Testis (tissue), 5 donors: ENCODE measurements at regions of chr6 and their contacts with region 1.

Region 1: DNA sequence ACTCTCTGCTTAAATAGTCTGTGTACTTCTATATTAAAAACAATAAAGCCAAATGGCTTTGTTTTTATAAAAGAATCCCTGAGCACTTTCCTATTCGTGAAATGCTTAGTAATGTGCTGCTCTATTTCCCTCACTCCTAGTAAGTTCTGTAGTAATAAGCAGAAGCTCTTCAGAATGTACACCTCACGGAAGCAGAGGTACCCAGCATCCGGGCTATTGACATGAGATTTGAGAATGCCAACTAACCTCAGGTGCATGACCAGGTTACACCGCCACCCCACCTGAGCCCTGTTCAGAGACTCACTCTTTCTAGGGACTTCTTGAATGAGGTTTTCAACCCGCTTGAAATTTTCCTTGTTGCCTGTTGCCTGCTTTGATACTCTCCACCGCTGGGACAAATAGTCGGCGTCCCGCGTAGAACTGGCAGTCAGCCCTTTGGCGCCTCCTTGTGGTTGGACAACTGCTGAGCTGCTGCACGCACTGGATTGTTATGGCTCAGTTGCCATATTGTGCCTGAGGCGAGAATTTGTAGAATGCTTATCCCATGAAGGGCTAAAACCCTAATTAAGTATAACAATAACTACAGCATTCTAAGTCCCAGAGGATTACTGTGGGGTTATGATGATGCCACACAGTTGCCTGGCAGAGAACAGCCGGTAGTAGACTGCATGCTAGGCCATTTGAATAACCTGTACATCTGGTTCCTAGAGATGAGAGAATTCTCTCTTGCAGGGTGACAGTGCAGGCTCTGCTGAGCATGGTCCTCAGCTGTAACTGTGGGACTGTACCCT is 95.4 kb downstream of the KHDC1L start:
- DNase-seq: peak; percentile 94
- H3K4me3 ChIP-seq: peak overlapping the region in 1 of 2 donors; percentile 21
- H3K27ac ChIP-seq: no peak overlapping the region
- H3K4me1 ChIP-seq: no peaks in the 10 kb centered on the region
- H3K27me3 ChIP-seq: no peaks in the 10 kb centered on the region
- CTCF ChIP-seq: peak; percentile 86 to 90 (median 88)
- POLR2A ChIP-seq: no peak

Region 2: GRCh38 chr6:72619883-72620696 is 509.8 kb before region 1 on chr6:
- intact Hi-C with region 1: loop called (anchors 10 kb)
- DNase-seq: peak; percentile 52
- H3K4me3 ChIP-seq: peak overlapping the region in 1 of 2 donors; percentile 58
- H3K27ac ChIP-seq: no peak overlapping the region
- H3K4me1 ChIP-seq: peaks cover 15% of the 10 kb centered on the region
- H3K27me3 ChIP-seq: no peaks in the 10 kb centered on the region
- CTCF ChIP-seq: no peak
- POLR2A ChIP-seq: no peak